BJ (cell line): ENCODE measurements at regions of chr10 and their contacts with region 1.

Region 1: DNA sequence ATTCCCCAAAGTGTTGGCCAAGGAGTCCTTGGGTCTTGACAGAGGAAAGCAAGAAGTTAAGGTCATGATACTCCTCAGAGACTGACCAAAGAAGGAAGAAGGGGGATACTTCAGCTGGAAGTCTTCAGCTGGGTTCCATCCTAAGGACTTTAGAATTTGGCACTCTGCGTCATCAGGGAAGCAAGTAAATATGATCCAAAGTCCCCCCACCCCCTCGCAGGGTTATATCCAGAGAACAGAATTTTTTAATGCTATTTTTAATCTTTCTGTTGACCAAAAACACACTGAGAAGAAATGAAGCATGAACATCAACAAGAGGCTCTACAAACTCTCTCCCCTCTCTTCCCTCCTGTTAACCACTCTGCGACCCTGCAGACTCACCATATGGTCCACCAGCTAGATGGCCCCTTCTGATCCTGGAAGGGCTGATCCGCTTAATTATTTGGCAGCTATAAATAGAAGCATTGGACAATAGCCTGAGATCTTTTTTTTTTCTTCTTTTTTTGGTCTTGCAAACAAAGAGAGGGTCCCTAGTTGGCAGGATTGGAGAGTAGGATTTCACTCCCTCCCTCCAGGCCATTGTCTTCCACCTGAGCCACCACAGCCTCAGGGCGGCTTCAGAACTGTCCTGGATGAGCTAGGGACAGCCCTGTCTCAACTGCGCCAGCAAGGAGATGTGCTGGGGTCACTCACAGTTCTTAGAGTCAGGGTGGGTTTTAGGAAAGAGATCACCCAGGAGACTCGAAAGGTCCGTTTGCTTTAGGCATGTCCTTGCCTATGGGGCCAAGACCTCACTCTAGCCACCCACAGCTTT is 196.0 kb downstream of the KCNMA1 start:
- DNase-seq: no peak
- H3K4me3 ChIP-seq: no peak overlapping the region
- H3K27me3 ChIP-seq: no peaks in the 10 kb centered on the region
- CTCF ChIP-seq: no peak

Region 2: GRCh38 chr10:77348082-77348481 is 93.5 kb before region 1 on chr10:
- CTCF ChIA-PET with region 1: no interaction called
- POLR2A ChIA-PET with region 1: no interaction called
- DNase-seq: no peak
- H3K4me3 ChIP-seq: no peak overlapping the region
- H3K27me3 ChIP-seq: no peaks in the 10 kb centered on the region
- CTCF ChIP-seq: no peak

Region 3: GRCh38 chr10:77371848-77372799 is 69.4 kb before region 1 on chr10:
- CTCF ChIA-PET with region 1: no interaction called
- POLR2A ChIA-PET with region 1: no interaction called
- DNase-seq: no peak
- H3K4me3 ChIP-seq: no peak overlapping the region
- H3K27me3 ChIP-seq: no peaks in the 10 kb centered on the region
- CTCF ChIP-seq: no peak

Region 4: DNA sequence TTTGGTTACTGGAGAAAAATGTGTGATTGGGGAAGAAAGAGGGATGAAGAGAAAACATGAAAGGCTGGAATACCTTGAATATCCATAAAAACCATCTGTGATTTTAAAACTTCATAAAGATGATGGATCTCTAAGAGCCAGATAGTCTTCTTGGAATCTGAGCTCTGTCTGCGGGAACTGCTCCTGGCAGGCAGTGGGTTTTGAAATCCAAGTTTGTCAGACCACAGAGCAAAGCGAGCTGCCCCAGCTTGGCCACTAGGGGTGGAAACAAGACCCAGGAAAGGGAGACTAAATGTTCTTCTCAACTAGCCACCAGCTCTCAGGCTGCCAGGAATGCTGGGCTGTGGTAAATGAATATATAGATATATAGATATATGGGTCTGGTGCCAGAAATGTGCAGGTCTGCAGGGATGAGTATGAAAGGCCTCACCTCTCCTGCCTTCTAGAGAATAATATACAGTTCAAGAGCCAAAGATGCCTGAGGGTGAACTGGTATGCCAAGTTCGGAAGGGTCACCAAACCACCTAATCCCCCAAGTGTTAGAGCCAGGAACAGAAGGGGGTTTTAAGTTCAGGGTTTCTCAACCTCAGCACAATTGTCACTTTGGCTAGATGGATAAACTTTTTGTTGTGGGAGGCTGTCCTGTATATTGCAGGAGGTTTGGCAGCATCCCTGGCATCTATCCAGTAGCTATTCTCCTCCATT is 12.7 kb before region 1 on chr10:
- CTCF ChIA-PET with region 1: interaction called, 15 read pairs
- POLR2A ChIA-PET with region 1: no interaction called
- DNase-seq: no peak
- H3K4me3 ChIP-seq: no peak overlapping the region
- H3K27me3 ChIP-seq: no peaks in the 10 kb centered on the region
- CTCF ChIP-seq: peak; percentile 71